IMR-90 (cell line): ENCODE measurements at regions of chr1 and their contacts with region 1.

Region 1: GRCh38 chr1:25564777-25565574 is 21.6 kb downstream of the LDLRAP1 start:
- DNase-seq: peak; percentile 47
- ATAC-seq: no peak
- H3K4me3 ChIP-seq: no peak overlapping the region
- H3K27ac ChIP-seq: 0 out of 2 replicates have a peak overlapping the region, but pooled peaks have one; percentile 4
- H3K4me1 ChIP-seq: peaks cover 41% of the 10 kb centered on the region
- H3K27me3 ChIP-seq: no peaks in the 10 kb centered on the region
- CTCF ChIP-seq: no peak
- POLR2A ChIP-seq: no peak
- RAD21 ChIP-seq: no peak

Region 2: GRCh38 chr1:24003331-24003972 is 1561.5 kb before region 1 on chr1:
- CTCF ChIA-PET with region 1: interaction called, 10 read pairs
- POLR2A ChIA-PET with region 1: no interaction called
- dilution Hi-C with region 1: no loop called
- in situ Hi-C with region 1: no loop called
- intact Hi-C with region 1: no loop called
- DNase-seq: peak; percentile 84
- ATAC-seq: peak; percentile 54
- H3K4me3 ChIP-seq: no peak overlapping the region
- H3K27ac ChIP-seq: no peak overlapping the region
- H3K4me1 ChIP-seq: peaks cover 7% of the 10 kb centered on the region
- H3K27me3 ChIP-seq: no peaks in the 10 kb centered on the region
- CTCF ChIP-seq: no peak
- POLR2A ChIP-seq: no peak
- RAD21 ChIP-seq: no peak